Aorta (tissue), 5 donors: ENCODE measurements at regions of chr12 and their contacts with region 1.

Region 1: GRCh38 chr12:108850854-108851573 is 6.4 kb downstream of the SSH1 start:
- DNase-seq: peak; percentile 83 to 86
- ATAC-seq: no peak
- H3K4me3 ChIP-seq: no peak overlapping the region
- H3K27ac ChIP-seq: peak overlapping the region in 1 of 2 donors; percentile 19
- H3K4me1 ChIP-seq: peaks cover 0 to 3% of the 10 kb centered on the region in 2 donors
- H3K27me3 ChIP-seq: no peaks in the 10 kb centered on the region

Region 2: DNA sequence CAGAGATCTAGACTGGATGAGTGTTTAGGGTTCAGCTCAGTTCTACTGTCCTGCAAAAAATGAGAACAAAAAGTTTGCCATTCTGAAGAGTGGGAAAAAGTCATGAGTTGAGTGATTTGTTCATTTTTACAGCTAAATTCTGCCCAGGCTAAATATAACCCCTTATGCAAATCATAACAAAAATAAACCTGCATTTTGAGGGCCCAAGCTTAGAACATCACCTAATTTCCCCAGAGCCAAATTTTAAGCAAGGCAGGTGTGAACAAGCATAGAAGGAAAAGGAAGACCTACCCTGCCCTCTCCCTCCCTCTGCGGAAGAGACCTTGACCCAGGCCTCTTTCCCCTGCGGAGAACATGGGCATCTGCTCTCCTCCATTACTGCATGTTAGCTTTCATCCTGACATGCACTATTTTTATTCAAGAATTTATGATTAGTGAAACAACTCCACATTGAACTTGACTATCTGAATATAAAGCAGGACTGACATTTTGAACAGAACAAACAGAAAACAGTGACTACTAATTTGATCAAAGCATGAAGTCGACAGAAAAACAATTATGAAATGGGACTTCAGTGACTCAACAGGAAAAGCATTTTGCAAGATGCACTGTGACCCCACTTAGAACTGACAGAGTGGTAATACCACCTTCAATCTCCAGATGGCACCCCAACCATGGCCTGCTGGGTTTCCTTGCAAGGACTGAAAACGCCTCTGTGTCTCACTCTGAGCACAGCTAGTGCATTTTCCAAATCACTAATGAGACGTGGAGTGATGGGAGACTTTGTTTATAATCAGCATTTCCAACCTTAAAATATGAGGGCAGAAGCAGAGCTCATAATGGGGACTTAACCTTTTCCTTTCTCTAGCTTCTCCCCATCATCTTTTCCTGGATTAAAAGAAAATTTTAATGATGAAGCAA is 186.4 kb before region 1 on chr12:
- intact Hi-C with region 1: loop called in 1 of 2 experiments (anchors 5 kb)
- DNase-seq: peak; percentile 83 to 88
- ATAC-seq: peak; percentile 98
- H3K4me3 ChIP-seq: no peak overlapping the region
- H3K27ac ChIP-seq: peak overlapping the region; percentile 82 to 97
- H3K4me1 ChIP-seq: peaks cover 0 to 8% of the 10 kb centered on the region in 2 donors
- H3K27me3 ChIP-seq: no peaks in the 10 kb centered on the region

Region 3: DNA sequence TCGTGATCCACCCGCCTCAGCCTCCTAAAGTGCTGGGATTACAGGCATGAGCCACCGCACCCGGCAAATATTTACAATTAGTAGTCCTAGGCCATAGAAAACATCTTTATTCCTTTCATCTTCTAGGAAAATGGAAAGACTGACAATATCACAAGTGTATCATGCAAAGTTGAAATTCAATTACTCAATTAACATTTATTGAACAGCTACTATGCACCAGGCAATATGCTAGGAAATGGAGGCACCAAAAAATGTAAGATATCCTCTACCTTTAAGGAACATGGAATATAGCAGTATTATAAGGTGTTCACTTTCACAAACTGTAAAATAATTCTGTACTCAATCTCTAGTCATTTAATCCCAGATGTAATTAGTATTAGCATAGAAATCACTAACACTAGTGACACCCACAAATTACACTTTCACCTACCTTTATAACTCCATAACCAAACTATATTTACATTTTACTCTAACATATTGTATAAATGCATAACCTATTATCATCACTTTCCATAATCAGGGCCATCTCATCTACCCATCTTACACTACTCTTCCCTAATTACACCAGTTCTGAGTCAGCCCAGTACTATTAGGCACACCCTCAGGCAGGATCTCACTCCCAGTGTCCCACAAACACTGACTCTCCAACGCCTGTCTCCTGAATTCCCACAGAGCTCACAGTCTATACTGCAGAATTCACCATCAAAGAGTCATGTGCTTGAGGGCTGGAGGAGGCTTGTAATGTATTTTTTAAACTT is 130.1 kb before region 1 on chr12:
- intact Hi-C with region 1: no loop called
- DNase-seq: no peak
- ATAC-seq: no peak
- H3K4me3 ChIP-seq: no peak overlapping the region
- H3K27ac ChIP-seq: no peak overlapping the region
- H3K4me1 ChIP-seq: peaks cover 4 to 6% of the 10 kb centered on the region in 2 donors
- H3K27me3 ChIP-seq: no peaks in the 10 kb centered on the region

Region 4: DNA sequence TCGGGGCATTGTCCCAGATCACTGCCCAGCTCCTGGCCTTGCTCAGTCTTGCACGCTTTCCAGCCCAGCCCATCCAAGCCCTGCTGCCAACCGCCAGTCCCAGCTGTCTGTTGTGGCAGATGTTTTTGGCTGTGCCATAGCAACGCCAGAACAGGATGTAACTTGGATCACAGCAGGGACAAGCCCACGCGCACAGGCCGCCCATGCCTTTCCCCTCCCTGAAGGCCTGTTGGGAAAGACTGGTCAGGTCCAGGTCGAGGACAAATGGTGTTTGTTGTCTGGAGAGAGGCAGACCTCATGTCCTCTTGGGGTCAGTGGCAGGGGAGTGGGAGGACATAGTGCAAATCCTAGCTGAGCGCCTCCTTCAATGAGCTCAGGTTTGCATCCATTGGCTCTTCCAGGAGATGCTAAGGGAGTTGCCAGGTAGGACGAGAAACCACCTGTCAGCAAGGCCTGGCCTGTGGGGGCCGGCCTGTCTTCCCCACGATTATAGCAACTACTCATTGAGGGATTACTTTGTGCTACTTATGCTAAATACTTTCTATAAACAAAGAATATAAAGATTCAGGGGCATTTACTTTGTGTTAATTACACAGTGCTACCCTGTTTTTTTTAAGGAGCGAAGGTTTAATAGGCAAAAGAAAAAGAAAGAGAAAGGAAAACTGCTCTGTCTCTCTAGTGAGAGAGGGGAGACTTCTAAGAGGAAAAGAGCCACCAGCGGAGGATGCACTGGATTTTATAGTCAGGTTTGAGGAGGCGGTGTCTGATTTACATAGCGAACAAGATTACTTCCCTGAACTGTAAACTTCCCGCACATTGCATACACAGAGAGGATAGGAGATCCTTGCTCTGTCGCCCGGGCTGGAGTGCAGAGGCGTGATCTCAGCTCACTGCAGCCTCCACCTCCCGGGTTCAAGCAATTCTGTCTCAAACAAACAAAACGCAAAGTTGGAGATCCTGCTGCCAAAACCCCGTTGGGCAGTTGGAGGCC is 76.9 kb before region 1 on chr12:
- intact Hi-C with region 1: no loop called
- DNase-seq: peak; percentile 91 to 92
- ATAC-seq: peak; percentile 90
- H3K4me3 ChIP-seq: no peak overlapping the region
- H3K27ac ChIP-seq: peak overlapping the region in 1 of 2 donors; percentile 49
- H3K4me1 ChIP-seq: no peaks in the 10 kb centered on the region
- H3K27me3 ChIP-seq: no peaks in the 10 kb centered on the region

Region 5: GRCh38 chr12:108816652-108817335 is 34.2 kb before region 1 on chr12:
- intact Hi-C with region 1: loop called in 1 of 2 experiments (anchors 5 kb)
- DNase-seq: peak in 1 of 2 donors; percentile 60
- ATAC-seq: peak; percentile 36
- H3K4me3 ChIP-seq: no peak overlapping the region
- H3K27ac ChIP-seq: no peak overlapping the region
- H3K4me1 ChIP-seq: no peaks in the 10 kb centered on the region
- H3K27me3 ChIP-seq: no peaks in the 10 kb centered on the region